CD4-positive, alpha-beta memory T cell (primary cell): ENCODE measurements at regions of chr1 and their contacts with region 1.

Region 1: GRCh38 chr1:161038523-161039153 is at the start of gene TSTD1:
- DNase-seq: peak; percentile 88 to 95 (median 89)
- H3K4me3 ChIP-seq: peak within 1 kb of the TSS; percentile 65 to 96
- H3K4me3 Mint-ChIP-seq: peak within 1 kb of the TSS; percentile 87 to 95 (median 91)
- H3K27ac ChIP-seq: peak within 1 kb of the TSS; percentile 83
- H3K27ac Mint-ChIP-seq: peak within 1 kb of the TSS; percentile 89 to 99 (median 97)
- H3K4me1 ChIP-seq: peaks cover 47% of the 10 kb centered on the region
- H3K4me1 Mint-ChIP-seq: peaks cover 25 to 56% (median 38%) of the 10 kb centered on the region in 4 donors
- H3K27me3 ChIP-seq: no peaks in the 10 kb centered on the region
- H3K27me3 Mint-ChIP-seq: no peaks in the 10 kb centered on the region
- total RNA-seq, gene TSTD1: 92.0 to 93.1 TPM

Region 2: GRCh38 chr1:161013488-161014230 is 25.0 kb before region 1 on chr1:
- CTCF ChIA-PET with region 1: interaction called, 42 read pairs
- POLR2A ChIA-PET with region 1: interaction called, 21 read pairs
- intact Hi-C with region 1: no loop called
- DNase-seq: peak; percentile 58 to 76 (median 63)
- H3K4me3 ChIP-seq: peak overlapping the region; percentile 14 to 53
- H3K4me3 Mint-ChIP-seq: peak overlapping the region; percentile 74 to 91 (median 84)
- H3K27ac ChIP-seq: peak overlapping the region; percentile 58
- H3K27ac Mint-ChIP-seq: peak overlapping the region; percentile 88 to 97 (median 94)
- H3K4me1 ChIP-seq: peaks cover 37% of the 10 kb centered on the region
- H3K4me1 Mint-ChIP-seq: peaks cover 24 to 56% (median 34%) of the 10 kb centered on the region in 4 donors
- H3K27me3 ChIP-seq: no peaks in the 10 kb centered on the region
- H3K27me3 Mint-ChIP-seq: no peaks in the 10 kb centered on the region

Region 3: GRCh38 chr1:161021165-161021960 is 17.3 kb before region 1 on chr1:
- CTCF ChIA-PET with region 1: interaction called, 42 read pairs
- POLR2A ChIA-PET with region 1: interaction called, 62 read pairs
- intact Hi-C with region 1: loop called (anchors 1 kb)
- DNase-seq: peak; percentile 88 to 98 (median 91)
- H3K4me3 ChIP-seq: peak overlapping the region; percentile 40 to 72
- H3K4me3 Mint-ChIP-seq: peak overlapping the region; percentile 89 to 97 (median 94)
- H3K27ac ChIP-seq: peak overlapping the region; percentile 72
- H3K27ac Mint-ChIP-seq: peak overlapping the region; percentile 86 to 99 (median 96)
- H3K4me1 ChIP-seq: peaks cover 36% of the 10 kb centered on the region
- H3K4me1 Mint-ChIP-seq: peaks cover 24 to 58% (median 35%) of the 10 kb centered on the region in 4 donors
- H3K27me3 ChIP-seq: no peaks in the 10 kb centered on the region
- H3K27me3 Mint-ChIP-seq: no peaks in the 10 kb centered on the region

Region 4: GRCh38 chr1:161117759-161118581 is 79.3 kb after region 1 on chr1 and contains the starts of genes NIT1 and PFDN2:
- CTCF ChIA-PET with region 1: interaction called, 3 read pairs
- POLR2A ChIA-PET with region 1: interaction called, 10 read pairs
- intact Hi-C with region 1: loop called (anchors 1 kb)
- DNase-seq: peak; percentile 83 to 87 (median 86)
- H3K4me3 ChIP-seq: peak within 1 kb of the TSS; percentile 32 to 95
- H3K4me3 Mint-ChIP-seq: peak within 1 kb of the TSS; percentile 94 to 98 (median 96)
- H3K27ac ChIP-seq: peak within 1 kb of the TSS; percentile 94
- H3K27ac Mint-ChIP-seq: peak within 1 kb of the TSS; percentile 94 to 99 (median 98)
- H3K4me1 ChIP-seq: peaks cover 64% of the 10 kb centered on the region
- H3K4me1 Mint-ChIP-seq: peaks cover 36 to 79% (median 61%) of the 10 kb centered on the region in 4 donors
- H3K27me3 ChIP-seq: no peaks in the 10 kb centered on the region
- H3K27me3 Mint-ChIP-seq: no peaks in the 10 kb centered on the region
- total RNA-seq, gene NIT1: 49.0 to 50.5 TPM
- total RNA-seq, gene PFDN2: 40.8 to 41.0 TPM